CD14-positive monocyte (primary cell): ENCODE measurements at regions of chr5 and their contacts with region 1.

Region 1: GRCh38 chr5:62509806-62510205 is 68.8 kb upstream of the LRRC70 start:
- DNase-seq: no peak
- H3K4me3 ChIP-seq: no peak overlapping the region
- H3K4me3 Mint-ChIP-seq: no peak overlapping the region
- H3K27ac ChIP-seq: no peak overlapping the region
- H3K27ac Mint-ChIP-seq: no peak overlapping the region
- H3K4me1 ChIP-seq: no peaks in the 10 kb centered on the region
- H3K4me1 Mint-ChIP-seq: no peaks in the 10 kb centered on the region
- H3K27me3 ChIP-seq: no peaks in the 10 kb centered on the region
- H3K27me3 Mint-ChIP-seq: no peaks in the 10 kb centered on the region
- CTCF ChIP-seq: no peak

Region 2: DNA sequence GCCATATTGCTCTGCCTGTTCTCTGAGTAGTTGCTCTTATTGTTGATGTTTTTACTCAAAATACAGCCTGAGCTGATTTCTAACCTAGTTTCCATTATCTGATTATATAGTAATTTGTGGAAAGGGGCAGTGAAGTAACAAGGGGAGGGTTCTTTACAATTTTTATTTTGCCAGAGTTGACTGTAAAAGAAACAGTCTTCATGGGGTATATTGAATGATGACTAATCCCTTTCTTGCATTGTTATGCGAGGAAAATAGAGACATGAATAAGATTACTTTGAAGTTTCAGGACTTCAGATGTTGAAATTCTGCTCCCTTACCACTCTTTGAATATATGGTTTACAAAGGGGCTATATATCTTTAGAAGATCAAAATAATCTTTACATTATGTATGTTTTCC is 59.7 kb after region 1 on chr5:
- intact Hi-C with region 1: loop called in 1 of 2 experiments (anchors 10 kb)
- DNase-seq: no peak
- H3K4me3 ChIP-seq: no peak overlapping the region
- H3K4me3 Mint-ChIP-seq: no peak overlapping the region
- H3K27ac ChIP-seq: no peak overlapping the region
- H3K27ac Mint-ChIP-seq: peak overlapping the region in 1 of 7 donors; percentile 44
- H3K4me1 ChIP-seq: peaks cover 0 to 4% of the 10 kb centered on the region in 2 donors
- H3K4me1 Mint-ChIP-seq: peaks cover 12% of the 10 kb centered on the region
- H3K27me3 ChIP-seq: no peaks in the 10 kb centered on the region
- H3K27me3 Mint-ChIP-seq: peaks cover 0 to 2% (median 0%) of the 10 kb centered on the region in 3 donors
- CTCF ChIP-seq: no peak